CD4-positive, alpha-beta T cell (primary cell): ENCODE measurements at regions of chr20 and their contacts with region 1.

Region 1: DNA sequence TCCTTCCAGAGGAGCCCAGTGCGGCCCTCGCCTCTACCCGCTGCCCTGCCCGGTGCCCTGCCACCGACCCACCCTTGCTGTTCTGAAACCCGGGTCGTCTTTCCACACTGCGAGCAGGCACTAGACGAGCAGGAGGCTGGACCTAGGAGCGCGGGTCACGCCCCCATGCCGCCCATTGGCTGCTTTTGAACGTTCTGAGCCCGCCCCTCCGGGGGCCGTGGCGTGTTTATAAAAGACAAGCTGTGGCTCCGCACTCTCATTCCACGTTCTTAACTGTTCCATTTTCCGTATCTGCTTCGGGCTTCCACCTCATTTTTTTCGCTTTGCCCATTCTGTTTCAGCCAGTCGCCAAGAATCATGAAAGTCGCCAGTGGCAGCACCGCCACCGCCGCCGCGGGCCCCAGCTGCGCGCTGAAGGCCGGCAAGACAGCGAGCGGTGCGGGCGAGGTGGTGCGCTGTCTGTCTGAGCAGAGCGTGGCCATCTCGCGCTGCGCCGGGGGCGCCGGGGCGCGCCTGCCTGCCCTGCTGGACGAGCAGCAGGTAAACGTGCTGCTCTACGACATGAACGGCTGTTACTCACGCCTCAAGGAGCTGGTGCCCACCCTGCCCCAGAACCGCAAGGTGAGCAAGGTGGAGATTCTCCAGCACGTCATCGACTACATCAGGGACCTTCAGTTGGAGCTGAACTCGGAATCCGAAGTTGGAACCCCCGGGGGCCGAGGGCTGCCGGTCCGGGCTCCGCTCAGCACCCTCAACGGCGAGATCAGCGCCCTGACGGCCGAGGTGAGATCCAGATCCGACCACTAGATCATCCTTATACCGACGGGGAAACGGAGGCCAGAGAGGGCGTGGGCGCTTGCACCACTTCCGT is at the start of gene ID1:
- DNase-seq: peak; percentile 75 to 94 (median 86)
- ATAC-seq: peak; percentile 93
- H3K4me3 ChIP-seq: peak within 1 kb of the TSS; percentile 68
- H3K4me3 Mint-ChIP-seq: peak within 1 kb of the TSS; percentile 94
- H3K27ac ChIP-seq: no peak within 1 kb of the TSS
- H3K27ac Mint-ChIP-seq: peak within 1 kb of the TSS; percentile 74
- H3K4me1 ChIP-seq: peaks cover 33% of the 10 kb centered on the region
- H3K4me1 Mint-ChIP-seq: peaks cover 25% of the 10 kb centered on the region
- H3K27me3 ChIP-seq: peaks cover 38 to 43% of the 10 kb centered on the region in 2 experiments
- H3K27me3 Mint-ChIP-seq: peaks cover 63% of the 10 kb centered on the region
- CTCF ChIP-seq: no peak
- total RNA-seq, gene ID1: 22.8 to 24.2 TPM

Region 2: GRCh38 chr20:31560094-31560899 is 45.0 kb before region 1 on chr20:
- CTCF ChIA-PET with region 1: interaction called, 347 read pairs
- POLR2A ChIA-PET with region 1: interaction called, 13 read pairs
- intact Hi-C with region 1: no loop called
- DNase-seq: peak; percentile 63 to 86 (median 72)
- ATAC-seq: peak; percentile 80
- H3K4me3 ChIP-seq: no peak overlapping the region
- H3K4me3 Mint-ChIP-seq: no peak overlapping the region
- H3K27ac ChIP-seq: no peak overlapping the region
- H3K27ac Mint-ChIP-seq: peak overlapping the region; percentile 49
- H3K4me1 ChIP-seq: peaks cover 14% of the 10 kb centered on the region
- H3K4me1 Mint-ChIP-seq: peaks cover 13% of the 10 kb centered on the region
- H3K27me3 ChIP-seq: no peaks in the 10 kb centered on the region
- H3K27me3 Mint-ChIP-seq: no peaks in the 10 kb centered on the region
- CTCF ChIP-seq: peak; percentile 86